ENCODE measurements at regions of chr3 and their contacts with region 1.

Region 1: GRCh38 chr3:147669077-147669476 is 259.9 kb downstream of the ZIC1 start:
- DNase-seq: no peak
- CTCF ChIP-seq: no peak

Region 2: GRCh38 chr3:147656023-147656422 is 13.1 kb before region 1 on chr3:
- CTCF ChIA-PET with region 1: interaction called, 14 read pairs
- POLR2A ChIA-PET with region 1: no interaction called
- DNase-seq: no peak
- CTCF ChIP-seq: no peak

Measured in GM10248 (cell line).